SK-N-SH (cell line): ENCODE measurements at regions of chr17 and their contacts with region 1.

Region 1: DNA sequence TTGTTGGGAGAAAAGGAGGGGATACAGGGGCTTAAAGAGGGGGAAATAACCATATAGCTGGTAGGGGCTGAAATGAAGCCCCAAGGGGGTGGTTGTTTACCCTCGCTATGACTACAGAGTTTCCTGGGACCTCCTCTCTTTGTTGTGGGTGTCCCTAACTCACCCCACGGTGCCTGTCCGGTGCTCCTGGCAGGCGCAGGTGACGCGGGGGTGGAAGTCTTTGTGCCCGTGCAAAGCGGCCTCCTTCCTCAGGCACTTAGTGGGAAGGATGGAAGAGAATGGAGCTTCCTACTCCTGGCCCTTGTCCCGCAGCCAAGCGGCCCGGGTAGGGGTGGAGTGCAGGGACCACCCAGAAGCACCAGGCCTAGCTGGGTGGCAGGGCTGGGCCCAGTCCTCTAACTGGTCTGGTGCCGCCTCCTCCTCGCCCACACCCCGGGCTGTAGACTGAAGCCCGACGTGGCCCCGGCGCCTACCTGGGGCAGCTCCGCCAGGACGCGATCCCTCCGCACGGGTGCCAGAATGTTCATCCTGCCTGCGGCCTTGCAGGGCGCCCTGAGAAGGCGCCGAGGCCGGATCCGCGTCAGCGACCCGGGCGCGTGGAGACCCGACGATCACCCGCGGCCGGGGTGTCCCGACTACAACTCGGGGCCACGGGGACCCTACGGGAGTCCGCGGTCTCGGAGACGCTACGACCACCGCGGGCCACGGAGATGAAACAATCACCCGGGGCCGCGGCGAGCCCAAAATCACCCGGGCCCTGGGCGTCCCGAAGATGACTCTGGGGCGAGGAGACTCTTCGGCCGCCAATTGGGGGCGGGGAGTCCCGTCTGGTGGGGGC is 709 bp downstream of the RAB34 start:
- DNase-seq: no peak
- H3K4me3 ChIP-seq: no peak overlapping the region
- H3K27ac ChIP-seq: no peak overlapping the region
- H3K4me1 ChIP-seq: peaks cover 0 to 5% of the 10 kb centered on the region in 2 experiments; a peak in 2 of 4 replicates
- H3K27me3 ChIP-seq: no peaks in the 10 kb centered on the region
- CTCF ChIP-seq: no peak
- EP300 ChIP-seq: no peak
- RAD21 ChIP-seq: no peak

Region 2: GRCh38 chr17:28743225-28744103 is 26.5 kb after region 1 on chr17 and contains the start of gene TRAF4:
- CTCF ChIA-PET with region 1: interaction called, 612 read pairs
- POLR2A ChIA-PET with region 1: interaction called, 45 read pairs
- DNase-seq: peak; percentile 92
- H3K4me3 ChIP-seq: peak within 1 kb of the TSS; percentile 83 to 95
- H3K27ac ChIP-seq: peak within 1 kb of the TSS; percentile 97 to 98
- H3K4me1 ChIP-seq: peaks cover 23 to 46% of the 10 kb centered on the region in 2 experiments; a peak in 3 of 4 replicates
- H3K27me3 ChIP-seq: no peaks in the 10 kb centered on the region
- CTCF ChIP-seq: no peak
- EP300 ChIP-seq: 0 out of 4 replicates have a peak, but pooled peaks of 1 of the 2 experiments have one; percentile 2
- RAD21 ChIP-seq: 0 out of 2 replicates have a peak, but pooled peaks have one; percentile 10
- polyA plus RNA-seq, gene TRAF4: 95.7 and 104 TPM in 2 replicates